IMR-90 (cell line): ENCODE measurements at regions of chr2 and their contacts with region 1.

Region 1: DNA sequence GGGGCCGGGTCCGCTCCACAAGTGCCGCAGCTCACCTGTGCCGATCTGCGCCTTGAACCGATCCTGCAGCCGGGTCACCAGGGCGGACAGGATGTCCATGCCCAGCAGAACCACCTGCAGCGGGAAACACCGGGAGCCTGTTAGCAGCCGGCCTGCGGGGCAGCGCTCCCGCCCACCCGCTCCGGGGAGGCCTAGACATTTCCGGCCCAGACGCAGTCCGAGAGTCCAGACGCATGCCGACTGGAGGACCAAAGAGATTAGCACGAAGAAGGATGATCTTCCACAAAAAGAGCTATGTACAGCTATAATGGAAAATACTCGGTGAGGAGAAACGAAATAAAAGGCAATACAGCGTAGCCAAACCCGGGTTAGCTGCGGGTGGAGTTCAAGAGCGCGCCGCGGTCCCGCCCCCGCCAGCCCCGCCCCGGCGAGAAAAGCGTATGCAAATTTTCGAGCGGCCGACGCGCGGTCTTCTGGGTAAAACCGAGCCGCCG is 421 bp upstream of the RNU4ATAC start:
- DNase-seq: peak; percentile 70
- ATAC-seq: peak; percentile 83
- H3K4me3 ChIP-seq: peak overlapping the region; percentile 79
- H3K27ac ChIP-seq: peak overlapping the region; percentile 94
- H3K4me1 ChIP-seq: peaks cover 6% of the 10 kb centered on the region
- H3K27me3 ChIP-seq: no peaks in the 10 kb centered on the region
- CTCF ChIP-seq: no peak
- POLR2A ChIP-seq: no peak
- RAD21 ChIP-seq: no peak

Region 2: DNA sequence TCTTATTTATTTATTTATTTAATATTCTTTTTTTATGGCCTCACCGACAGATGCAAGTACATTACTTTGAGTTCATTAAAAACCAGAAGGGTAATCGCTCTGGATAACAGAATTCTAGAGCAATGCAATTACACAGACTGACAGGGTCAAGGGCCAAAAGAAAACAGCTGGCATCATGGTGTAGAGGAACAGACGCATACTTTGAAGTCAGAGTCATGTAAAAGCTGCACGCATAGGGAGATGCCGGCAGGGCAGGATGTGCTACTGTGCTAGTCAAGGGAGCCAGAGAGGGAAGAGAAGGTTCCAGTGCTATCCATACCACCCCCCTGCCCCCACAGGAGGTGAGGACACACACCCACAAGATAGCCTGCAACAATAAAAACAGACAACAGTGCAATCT is 130.1 kb before region 1 on chr2:
- CTCF ChIA-PET with region 1: interaction called, 4 read pairs
- POLR2A ChIA-PET with region 1: no interaction called
- dilution Hi-C with region 1: no loop called
- in situ Hi-C with region 1: no loop called
- intact Hi-C with region 1: loop called (anchors 1 kb)
- DNase-seq: peak; percentile 85
- ATAC-seq: peak; percentile 82
- H3K4me3 ChIP-seq: no peak overlapping the region
- H3K27ac ChIP-seq: peak overlapping the region; percentile 43; the same call in 1 of the 2 replicates
- H3K4me1 ChIP-seq: peaks cover 4% of the 10 kb centered on the region
- H3K27me3 ChIP-seq: no peaks in the 10 kb centered on the region
- CTCF ChIP-seq: no peak
- POLR2A ChIP-seq: no peak
- RAD21 ChIP-seq: no peak; the same call in 1 of the 2 replicates

Region 3: DNA sequence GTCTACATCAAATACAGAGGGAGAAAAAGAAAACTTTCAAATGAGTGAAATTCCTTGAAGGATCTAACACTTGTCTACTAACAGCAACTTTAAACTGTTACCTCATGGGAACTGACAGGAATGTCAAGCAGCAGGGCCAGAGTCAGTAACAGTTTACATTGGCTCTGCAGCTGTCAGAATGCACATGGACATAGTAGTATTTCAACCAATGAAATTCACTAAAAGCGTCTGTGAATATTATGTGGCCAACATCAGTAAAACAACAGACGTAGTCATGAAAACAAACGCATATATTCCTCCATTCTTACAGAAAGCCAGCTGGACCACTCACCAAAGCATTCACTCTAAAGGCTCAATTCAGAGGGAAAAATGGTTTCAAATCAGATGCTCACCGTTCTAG is 78.9 kb before region 1 on chr2:
- CTCF ChIA-PET with region 1: no interaction called
- POLR2A ChIA-PET with region 1: interaction called, 3 read pairs
- dilution Hi-C with region 1: no loop called
- in situ Hi-C with region 1: loop called (anchors 10 kb)
- intact Hi-C with region 1: no loop called
- DNase-seq: peak; percentile 91
- ATAC-seq: peak; percentile 92
- H3K4me3 ChIP-seq: no peak overlapping the region
- H3K27ac ChIP-seq: no peak overlapping the region
- H3K4me1 ChIP-seq: peaks cover 11% of the 10 kb centered on the region
- H3K27me3 ChIP-seq: no peaks in the 10 kb centered on the region
- CTCF ChIP-seq: no peak
- POLR2A ChIP-seq: no peak
- RAD21 ChIP-seq: no peak

Region 4: GRCh38 chr2:121649596-121650314 is 119.5 kb after region 1 on chr2:
- CTCF ChIA-PET with region 1: interaction called, 6 read pairs
- POLR2A ChIA-PET with region 1: interaction called, 6 read pairs
- dilution Hi-C with region 1: no loop called
- in situ Hi-C with region 1: no loop called
- intact Hi-C with region 1: loop called (anchors 1 kb)
- DNase-seq: peak; percentile 97
- ATAC-seq: peak; percentile 97
- H3K4me3 ChIP-seq: peak overlapping the region; percentile 72
- H3K27ac ChIP-seq: peak overlapping the region; percentile 96
- H3K4me1 ChIP-seq: peaks cover 6% of the 10 kb centered on the region; the same call in 1 of the 2 replicates
- H3K27me3 ChIP-seq: no peaks in the 10 kb centered on the region
- CTCF ChIP-seq: 0 out of 2 replicates have a peak, but pooled peaks have one; percentile 3
- POLR2A ChIP-seq: peak; percentile 69
- RAD21 ChIP-seq: peak; percentile 10; the same call in 1 of the 2 replicates

Region 5: GRCh38 chr2:121722479-121722878 is 192.2 kb after region 1 on chr2:
- CTCF ChIA-PET with region 1: interaction called, 3 read pairs
- POLR2A ChIA-PET with region 1: interaction called, 4 read pairs
- dilution Hi-C with region 1: no loop called
- in situ Hi-C with region 1: loop called (anchors 10 kb)
- intact Hi-C with region 1: loop called (anchors 1 kb)
- DNase-seq: peak; percentile 87
- ATAC-seq: peak; percentile 55
- H3K4me3 ChIP-seq: no peak overlapping the region
- H3K27ac ChIP-seq: peak overlapping the region; percentile 59; the same call in 1 of the 2 replicates
- H3K4me1 ChIP-seq: peaks cover 6% of the 10 kb centered on the region; the same call in 1 of the 2 replicates
- H3K27me3 ChIP-seq: no peaks in the 10 kb centered on the region
- CTCF ChIP-seq: no peak; the same call in 1 of the 2 replicates
- POLR2A ChIP-seq: no peak
- RAD21 ChIP-seq: no peak

Region 6: DNA sequence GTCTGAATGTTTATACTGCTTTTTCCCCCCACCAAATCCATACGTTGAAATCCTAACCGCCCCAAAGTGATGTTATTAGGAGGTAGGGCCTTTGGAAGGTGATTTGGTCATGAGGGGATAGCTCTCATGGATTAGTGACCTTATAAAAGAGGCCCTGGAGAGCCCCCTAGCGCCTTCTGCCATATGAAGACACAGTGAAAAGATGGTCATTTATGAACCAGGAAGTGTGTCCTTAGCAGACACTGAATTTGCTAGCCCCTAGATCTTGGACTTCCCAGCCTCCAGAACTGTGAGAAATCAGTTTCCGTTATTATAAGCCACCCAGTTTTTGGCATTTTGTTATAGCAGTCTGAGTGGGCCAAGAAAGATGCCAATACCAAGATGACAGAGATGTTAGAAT is 217.9 kb after region 1 on chr2:
- CTCF ChIA-PET with region 1: no interaction called
- POLR2A ChIA-PET with region 1: no interaction called
- dilution Hi-C with region 1: no loop called
- in situ Hi-C with region 1: no loop called
- intact Hi-C with region 1: loop called (anchors 1 kb)
- DNase-seq: peak; percentile 51
- ATAC-seq: peak; percentile 90
- H3K4me3 ChIP-seq: no peak overlapping the region
- H3K27ac ChIP-seq: no peak overlapping the region
- H3K4me1 ChIP-seq: no peaks in the 10 kb centered on the region
- H3K27me3 ChIP-seq: no peaks in the 10 kb centered on the region
- CTCF ChIP-seq: peak; percentile 61
- POLR2A ChIP-seq: no peak
- RAD21 ChIP-seq: peak; percentile 63

Region 7: GRCh38 chr2:122072666-122073065 is 542.4 kb after region 1 on chr2:
- CTCF ChIA-PET with region 1: no interaction called
- POLR2A ChIA-PET with region 1: no interaction called
- dilution Hi-C with region 1: no loop called
- in situ Hi-C with region 1: no loop called
- intact Hi-C with region 1: no loop called
- DNase-seq: peak; percentile 45
- ATAC-seq: no peak
- H3K4me3 ChIP-seq: no peak overlapping the region
- H3K27ac ChIP-seq: no peak overlapping the region
- H3K4me1 ChIP-seq: no peaks in the 10 kb centered on the region
- H3K27me3 ChIP-seq: no peaks in the 10 kb centered on the region
- CTCF ChIP-seq: no peak
- POLR2A ChIP-seq: no peak
- RAD21 ChIP-seq: no peak